PC-9 (cell line): ENCODE measurements at regions of chr2 and their contacts with region 1.

Region 1: DNA sequence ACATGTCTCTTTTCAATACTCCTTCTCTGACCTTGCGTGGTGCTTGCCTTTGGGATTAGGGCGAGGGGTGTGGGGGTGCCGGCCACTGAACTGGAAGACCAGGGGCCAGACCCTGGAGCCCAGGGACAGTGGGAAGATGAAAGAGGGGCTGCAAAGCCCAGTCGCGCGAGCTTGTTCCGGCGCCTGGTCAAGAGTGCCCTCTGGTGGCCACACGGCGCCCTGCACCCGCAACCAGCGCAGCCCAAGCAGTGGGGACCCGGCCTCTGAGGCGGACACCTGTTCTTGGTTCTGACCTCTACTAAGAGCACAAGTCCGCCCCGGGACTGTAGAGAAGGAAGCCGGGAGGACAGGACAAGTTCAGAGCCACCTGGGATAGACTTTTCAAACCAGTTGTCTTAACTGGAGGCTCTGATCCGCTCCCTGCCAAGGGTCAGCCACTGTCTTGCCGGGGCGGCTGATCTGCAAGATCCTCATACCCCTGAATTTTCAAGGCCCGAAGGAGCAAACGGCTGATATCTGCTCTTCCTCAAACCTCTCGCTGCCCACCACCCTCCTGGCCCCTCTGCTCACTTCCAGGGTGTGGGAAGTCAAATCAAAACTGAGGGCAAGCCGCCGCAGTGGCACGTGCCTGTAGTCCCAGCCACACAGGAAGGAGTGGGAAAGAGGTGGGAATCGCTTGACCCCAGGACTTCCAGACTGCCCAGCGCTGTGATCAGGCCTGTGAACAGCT is 14.9 kb upstream of the MSH6 start:
- DNase-seq: peak in 1 of 2 experiments; percentile 74
- H3K4me3 ChIP-seq: peak overlapping the region; percentile 37; the same call in 1 of the 2 replicates
- H3K27ac ChIP-seq: no peak overlapping the region
- H3K4me1 ChIP-seq: peaks cover 4% of the 10 kb centered on the region; the same call in 1 of the 2 replicates
- H3K27me3 ChIP-seq: no peaks in the 10 kb centered on the region
- CTCF ChIP-seq: peak; percentile 100

Region 2: DNA sequence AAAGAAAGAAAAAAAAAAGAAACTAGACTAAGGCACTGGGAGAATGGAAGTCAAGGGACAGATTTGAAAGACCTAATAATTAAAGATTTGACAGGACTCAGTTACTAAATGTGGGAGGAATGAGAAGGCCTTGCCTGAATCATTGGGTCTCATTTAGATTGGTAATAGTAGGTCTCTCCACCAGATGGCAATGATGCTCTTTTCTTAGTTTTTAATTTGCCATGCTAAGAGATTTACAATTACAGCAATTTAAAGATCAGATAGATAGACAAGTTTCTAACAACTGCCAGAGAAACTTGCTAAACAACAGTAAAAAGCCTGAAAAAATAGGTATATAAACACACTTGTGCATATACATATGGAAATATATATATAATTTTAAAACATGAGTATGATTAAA is 1135.7 kb before region 1 on chr2:
- CTCF ChIA-PET with region 1: no interaction called
- POLR2A ChIA-PET with region 1: no interaction called
- intact Hi-C with region 1: loop called (anchors 5 kb)
- DNase-seq: peak in 1 of 2 experiments; percentile 60
- H3K4me3 ChIP-seq: no peak overlapping the region
- H3K27ac ChIP-seq: no peak overlapping the region
- H3K4me1 ChIP-seq: no peaks in the 10 kb centered on the region
- H3K27me3 ChIP-seq: no peaks in the 10 kb centered on the region
- CTCF ChIP-seq: peak; percentile 85

Region 3: DNA sequence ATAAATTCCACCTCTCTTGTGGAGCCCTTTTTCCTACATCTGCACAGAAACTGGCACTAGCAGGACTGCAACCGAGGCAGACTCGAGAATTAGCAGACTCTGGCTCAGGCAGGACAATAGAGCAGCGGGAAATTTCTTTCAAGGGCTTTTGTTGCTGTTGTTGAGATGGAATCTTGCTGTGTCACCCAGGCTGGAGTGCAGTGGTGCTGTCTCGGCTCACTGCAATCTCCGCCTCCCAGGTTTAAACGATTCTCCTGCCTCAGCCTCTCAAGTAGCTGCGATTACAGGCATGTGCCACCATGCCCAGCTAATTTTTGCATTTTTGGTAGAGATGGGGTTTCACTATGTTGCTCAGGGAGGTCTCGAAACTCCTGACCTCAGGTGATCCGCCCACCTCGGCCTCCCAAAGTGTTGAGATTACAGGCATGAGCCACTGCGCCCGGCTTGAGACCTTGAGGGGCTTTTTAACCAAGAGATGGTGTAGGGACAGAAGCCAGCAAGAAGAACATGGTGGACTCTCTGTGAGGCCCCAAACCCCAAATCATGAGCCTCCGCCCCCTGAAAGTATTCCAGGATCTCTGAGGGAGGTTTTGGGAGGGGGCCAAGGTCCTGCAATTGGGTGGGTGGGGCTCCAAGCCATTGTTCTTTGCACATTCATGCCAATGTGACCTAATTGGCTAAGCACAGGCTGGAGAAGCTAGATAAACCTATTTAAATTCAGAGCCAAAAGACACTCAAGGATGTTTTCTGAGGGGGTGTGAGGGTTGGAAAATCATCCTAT is 433.5 kb before region 1 on chr2:
- CTCF ChIA-PET with region 1: interaction called, 7 read pairs
- POLR2A ChIA-PET with region 1: no interaction called
- intact Hi-C with region 1: loop called (anchors 1 kb)
- DNase-seq: no peak
- H3K4me3 ChIP-seq: no peak overlapping the region
- H3K27ac ChIP-seq: no peak overlapping the region
- H3K4me1 ChIP-seq: peaks cover 13% of the 10 kb centered on the region
- H3K27me3 ChIP-seq: no peaks in the 10 kb centered on the region
- CTCF ChIP-seq: no peak

Region 4: DNA sequence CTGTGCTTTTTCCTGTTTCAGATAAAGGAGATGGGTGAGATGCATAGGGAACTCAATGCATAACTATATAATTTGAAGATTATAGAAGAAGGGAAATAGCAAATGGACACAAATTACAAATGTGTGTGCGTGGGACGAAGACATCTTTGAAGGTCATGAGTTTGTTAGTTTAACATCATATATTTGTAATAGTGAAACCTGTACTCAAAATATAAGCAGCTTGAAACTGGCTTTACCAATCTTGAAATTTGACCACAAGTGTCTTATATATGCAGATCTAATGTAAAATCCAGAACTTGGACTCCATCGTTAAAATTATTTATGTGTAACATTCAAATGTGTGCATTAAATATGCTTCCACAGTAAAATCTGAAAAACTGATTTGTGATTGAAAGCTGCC is 381.5 kb before region 1 on chr2:
- CTCF ChIA-PET with region 1: interaction called, 5 read pairs
- POLR2A ChIA-PET with region 1: interaction called, 4 read pairs
- intact Hi-C with region 1: loop called (anchors 1 kb)
- DNase-seq: no peak
- H3K4me3 ChIP-seq: no peak overlapping the region
- H3K27ac ChIP-seq: no peak overlapping the region
- H3K4me1 ChIP-seq: no peaks in the 10 kb centered on the region
- H3K27me3 ChIP-seq: no peaks in the 10 kb centered on the region
- CTCF ChIP-seq: no peak

Region 5: DNA sequence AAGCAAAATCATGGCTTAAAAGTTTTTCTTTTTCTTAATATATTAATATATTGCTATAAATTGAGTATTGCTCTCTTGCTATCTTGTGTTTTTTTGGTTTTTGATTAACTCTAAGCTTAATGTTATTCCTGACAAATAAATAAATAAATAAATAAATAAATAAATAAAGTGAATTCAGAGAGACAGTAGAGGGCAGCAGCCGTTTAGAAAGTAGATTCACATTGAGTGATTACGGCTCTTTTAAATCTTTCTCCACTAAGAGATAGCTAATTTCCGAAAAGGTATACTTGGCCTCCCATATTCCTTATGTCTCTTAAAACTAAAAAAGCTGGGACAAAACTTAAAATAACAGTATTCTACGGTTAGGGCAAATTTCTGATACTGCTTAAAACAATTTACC is 330.8 kb before region 1 on chr2:
- CTCF ChIA-PET with region 1: interaction called, 21 read pairs
- POLR2A ChIA-PET with region 1: no interaction called
- intact Hi-C with region 1: loop called (anchors 2 kb)
- DNase-seq: no peak
- H3K4me3 ChIP-seq: no peak overlapping the region
- H3K27ac ChIP-seq: no peak overlapping the region
- H3K4me1 ChIP-seq: no peaks in the 10 kb centered on the region
- H3K27me3 ChIP-seq: no peaks in the 10 kb centered on the region
- CTCF ChIP-seq: peak; percentile 68

Region 6: DNA sequence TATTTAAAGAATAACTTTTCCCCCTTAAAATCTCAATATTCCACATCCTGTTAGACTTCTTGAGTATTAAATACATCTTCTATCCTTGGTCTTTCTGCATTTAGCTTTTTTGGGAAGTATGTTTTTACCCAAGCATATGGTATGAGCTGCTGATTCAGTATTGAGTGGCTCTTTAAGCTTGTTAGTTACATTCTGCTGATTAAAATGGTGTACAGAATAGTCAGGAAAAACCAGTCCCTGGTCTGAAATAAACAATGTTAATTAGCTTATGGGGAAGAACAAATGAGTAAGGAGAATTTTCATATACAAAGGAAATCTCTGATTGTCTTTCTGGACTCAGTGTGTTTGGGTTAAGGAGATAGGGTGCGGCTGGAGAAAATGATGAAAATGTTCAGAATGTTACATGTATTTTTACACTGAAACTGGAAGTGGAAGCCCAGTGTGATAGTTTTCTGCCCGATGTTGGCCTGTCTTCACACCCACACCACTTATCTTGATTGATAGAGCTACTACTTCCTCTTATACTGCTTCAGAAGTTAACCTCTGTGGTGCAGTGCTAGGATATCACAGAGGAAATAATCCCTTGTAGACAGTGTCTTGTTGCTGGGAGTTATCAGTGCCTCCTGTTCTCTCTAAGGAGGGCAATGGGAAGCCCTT is 281.1 kb before region 1 on chr2:
- CTCF ChIA-PET with region 1: no interaction called
- POLR2A ChIA-PET with region 1: interaction called, 3 read pairs
- intact Hi-C with region 1: loop called (anchors 2 kb)
- DNase-seq: no peak
- H3K4me3 ChIP-seq: no peak overlapping the region
- H3K27ac ChIP-seq: no peak overlapping the region
- H3K4me1 ChIP-seq: peaks cover 15% of the 10 kb centered on the region
- H3K27me3 ChIP-seq: no peaks in the 10 kb centered on the region
- CTCF ChIP-seq: no peak

Region 7: GRCh38 chr2:47653902-47654789 is 113.9 kb before region 1 on chr2:
- CTCF ChIA-PET with region 1: interaction called, 5 read pairs
- POLR2A ChIA-PET with region 1: no interaction called
- intact Hi-C with region 1: loop called (anchors 10 kb)
- DNase-seq: peak; percentile 59 to 61
- H3K4me3 ChIP-seq: no peak overlapping the region
- H3K27ac ChIP-seq: 0 out of 2 replicates have a peak overlapping the region, but pooled peaks have one; percentile 5
- H3K4me1 ChIP-seq: peaks cover 41% of the 10 kb centered on the region
- H3K27me3 ChIP-seq: no peaks in the 10 kb centered on the region
- CTCF ChIP-seq: peak; percentile 57; the same call in 1 of the 2 replicates